Cardiac septum (tissue), 1 donor: ENCODE measurements at regions of chr7 and their contacts with region 1.

Region 1: DNA sequence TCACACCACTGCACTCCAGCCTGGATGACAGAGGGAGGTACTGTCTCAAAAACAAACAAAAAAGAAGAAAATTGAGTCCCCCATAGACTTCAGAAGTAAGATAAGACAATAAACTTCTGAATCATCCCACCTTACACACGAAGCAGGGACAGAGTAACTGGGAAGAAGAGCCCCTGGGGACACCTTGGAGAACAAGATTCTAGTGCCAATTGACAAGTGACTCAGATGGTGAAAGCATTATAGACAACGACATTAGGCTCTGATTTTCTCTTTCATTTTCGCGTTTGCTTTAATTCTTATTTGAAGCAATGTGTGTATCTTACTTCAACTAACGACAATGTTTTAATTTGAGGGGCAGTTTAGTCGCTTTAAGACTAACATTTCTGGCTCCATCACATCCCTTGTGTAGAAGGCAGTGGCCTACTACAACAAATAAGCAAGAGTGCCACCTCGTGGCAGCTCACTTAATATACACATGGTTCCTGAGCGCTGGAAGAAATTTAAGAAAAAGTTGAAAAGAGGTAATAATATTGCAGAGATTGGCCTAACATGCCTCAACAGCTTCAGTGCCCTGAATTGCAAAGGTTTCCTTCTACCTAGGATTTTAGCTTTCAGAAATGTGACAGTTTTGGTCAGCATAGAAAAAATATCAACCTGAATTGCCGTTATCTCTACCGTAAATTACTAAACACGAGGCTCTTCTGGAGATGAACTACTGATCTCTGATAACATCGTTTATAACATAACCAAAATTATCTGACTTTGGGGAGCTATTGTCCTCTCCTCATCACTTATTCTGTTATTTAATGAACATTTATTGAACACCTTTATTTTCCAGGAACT is 36.7 kb downstream of the ASNS start:
- DNase-seq: no peak

Region 2: DNA sequence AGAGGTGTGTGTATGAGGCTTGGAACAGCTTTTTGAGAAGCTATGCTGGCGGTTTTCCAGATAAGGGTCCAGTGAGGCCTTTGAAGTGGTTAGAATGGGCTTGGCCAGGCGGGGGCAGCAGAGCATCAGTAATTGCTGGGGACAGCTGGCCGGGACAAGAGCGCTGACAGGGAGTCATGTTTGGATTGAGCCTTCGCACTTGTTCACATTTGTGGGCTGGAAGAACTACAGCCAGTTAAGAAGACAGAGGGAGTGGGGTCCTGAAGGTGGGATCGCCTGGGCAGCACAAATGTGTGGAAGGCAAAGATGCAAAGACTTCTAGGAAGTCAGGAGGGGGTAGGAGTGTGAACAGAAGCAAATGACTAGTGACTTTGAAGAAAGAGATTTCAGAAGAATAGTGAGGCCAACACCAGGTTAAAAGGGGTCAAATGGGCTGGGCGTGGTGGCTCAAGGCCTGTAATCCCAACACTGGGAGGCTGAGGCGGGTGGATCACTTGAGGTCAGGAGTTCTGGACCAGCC is 730.7 kb before region 1 on chr7:
- intact Hi-C with region 1: loop called (anchors 2 kb)
- DNase-seq: peak; percentile 90

Region 3: DNA sequence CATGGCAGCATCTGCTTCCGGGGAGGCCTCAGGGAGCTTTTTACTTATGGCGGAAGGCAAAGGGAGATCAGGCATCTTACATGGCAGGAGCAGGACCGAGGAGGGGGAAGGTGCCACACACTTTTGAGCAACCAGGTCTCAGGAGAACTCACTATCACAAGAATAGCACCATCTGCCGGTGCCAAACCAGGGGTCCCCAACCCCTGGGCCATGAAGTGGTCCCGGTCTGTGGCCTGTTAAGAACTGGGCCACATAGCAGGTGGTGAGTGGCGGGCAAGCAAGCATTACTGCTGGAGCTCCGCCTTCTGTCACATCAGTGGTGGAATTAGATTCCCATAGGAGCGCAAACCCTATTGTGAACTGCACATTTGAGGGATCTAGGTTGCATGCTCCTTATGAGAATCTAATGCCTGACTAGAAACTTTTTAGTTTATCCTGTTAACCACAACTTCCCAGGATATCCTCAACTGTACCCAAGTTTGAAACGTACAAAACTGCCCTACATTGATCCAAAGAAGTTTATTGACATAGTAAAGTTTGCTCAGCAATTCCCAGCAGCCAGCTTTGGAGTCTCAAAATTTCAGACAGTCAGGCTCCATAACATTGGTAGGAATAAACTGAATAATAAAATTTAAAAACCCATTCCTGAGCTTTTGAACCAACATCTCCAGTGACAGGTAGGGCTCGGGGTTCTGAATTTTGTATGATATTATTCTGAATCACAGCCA is 332.0 kb before region 1 on chr7:
- intact Hi-C with region 1: loop called (anchors 5 kb)
- DNase-seq: no peak

Region 4: GRCh38 chr7:97697396-97697795 is 138.1 kb before region 1 on chr7:
- intact Hi-C with region 1: no loop called
- DNase-seq: no peak

Region 5: GRCh38 chr7:97731736-97732564 is 103.6 kb before region 1 on chr7 and contains the start of gene TAC1:
- intact Hi-C with region 1: no loop called
- DNase-seq: no peak
- total RNA-seq, gene TAC1: not detected

Region 6: GRCh38 chr7:98000356-98000755 is 164.8 kb after region 1 on chr7:
- intact Hi-C with region 1: no loop called
- DNase-seq: no peak

Region 7: DNA sequence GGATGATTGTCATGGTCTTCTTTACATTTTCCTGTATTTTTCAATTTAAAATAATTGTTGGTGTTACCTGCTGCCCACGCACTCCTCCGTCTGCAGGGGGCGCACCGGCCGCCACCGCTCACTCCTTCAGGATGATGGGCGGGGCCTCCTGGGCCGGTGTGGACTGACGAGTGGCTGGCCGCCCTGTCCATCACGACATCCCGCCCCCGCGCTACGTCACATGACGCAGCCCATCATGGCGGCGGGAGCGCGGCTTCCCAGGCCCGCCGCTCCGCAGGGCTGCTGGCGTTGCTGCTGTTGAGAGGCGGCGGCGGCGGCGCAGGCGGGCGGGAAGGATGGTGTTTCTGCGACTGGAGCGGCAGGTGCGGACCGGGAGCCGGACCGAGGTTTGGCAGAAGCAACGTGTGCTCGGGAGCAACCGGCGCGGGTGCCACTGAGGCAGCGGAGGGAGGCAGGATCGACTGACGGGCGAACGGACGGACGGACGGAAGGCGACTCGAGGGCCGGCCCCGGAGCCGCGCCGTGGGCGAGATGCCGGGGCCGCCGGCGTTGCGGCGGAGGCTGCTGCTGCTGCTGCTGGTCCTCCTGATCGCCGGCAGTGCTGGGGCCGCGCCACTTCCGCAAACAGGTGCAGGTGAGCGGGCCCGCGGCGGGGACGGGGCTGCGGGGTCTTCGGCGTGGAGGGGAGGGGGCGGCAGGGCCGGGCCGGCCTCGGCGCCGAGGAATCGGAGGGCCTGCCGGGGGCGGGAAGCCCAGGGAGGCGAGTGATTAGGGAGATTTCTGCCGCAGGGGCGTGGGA is 271.3 kb after region 1 on chr7 and contains the start of gene LMTK2:
- intact Hi-C with region 1: no loop called
- DNase-seq: peak; percentile 97
- total RNA-seq, gene LMTK2: 28.3 TPM